ENCODE measurements at regions of chr5 and their contacts with region 1.

Region 1: GRCh38 chr5:32585446-32586275 is at the start of gene SUB1:
- DNase-seq: peak; percentile 92
- H3K4me3 Mint-ChIP-seq: peak within 1 kb of the TSS; percentile 95
- H3K27ac Mint-ChIP-seq: peak within 1 kb of the TSS; percentile 94
- H3K4me1 Mint-ChIP-seq: peaks cover 21% of the 10 kb centered on the region
- H3K27me3 Mint-ChIP-seq: no peaks in the 10 kb centered on the region
- CTCF ChIP-seq: no peak
- total RNA-seq, gene SUB1: 269 and 302 TPM in 2 replicates

Region 2: GRCh38 chr5:32390819-32391591 is 194.7 kb before region 1 on chr5:
- CTCF ChIA-PET with region 1: interaction called, 7 read pairs
- POLR2A ChIA-PET with region 1: interaction called, 5 read pairs
- intact Hi-C with region 1: loop called (anchors 2 kb)
- DNase-seq: peak; percentile 89
- H3K4me3 Mint-ChIP-seq: peak overlapping the region; percentile 36
- H3K27ac Mint-ChIP-seq: peak overlapping the region; percentile 90
- H3K4me1 Mint-ChIP-seq: peaks cover 22% of the 10 kb centered on the region
- H3K27me3 Mint-ChIP-seq: no peaks in the 10 kb centered on the region
- CTCF ChIP-seq: no peak

Region 3: GRCh38 chr5:32482193-32482592 is 103.5 kb before region 1 on chr5:
- CTCF ChIA-PET with region 1: interaction called, 169 read pairs
- POLR2A ChIA-PET with region 1: no interaction called
- intact Hi-C with region 1: no loop called
- DNase-seq: no peak
- H3K4me3 Mint-ChIP-seq: no peak overlapping the region
- H3K27ac Mint-ChIP-seq: no peak overlapping the region
- H3K4me1 Mint-ChIP-seq: no peaks in the 10 kb centered on the region
- H3K27me3 Mint-ChIP-seq: no peaks in the 10 kb centered on the region
- CTCF ChIP-seq: no peak

Region 4: GRCh38 chr5:32504989-32505596 is 80.6 kb before region 1 on chr5:
- CTCF ChIA-PET with region 1: interaction called, 11 read pairs
- POLR2A ChIA-PET with region 1: interaction called, 4 read pairs
- intact Hi-C with region 1: no loop called
- DNase-seq: peak; percentile 60
- H3K4me3 Mint-ChIP-seq: no peak overlapping the region
- H3K27ac Mint-ChIP-seq: no peak overlapping the region
- H3K4me1 Mint-ChIP-seq: peaks cover 6% of the 10 kb centered on the region
- H3K27me3 Mint-ChIP-seq: no peaks in the 10 kb centered on the region
- CTCF ChIP-seq: no peak

Region 5: DNA sequence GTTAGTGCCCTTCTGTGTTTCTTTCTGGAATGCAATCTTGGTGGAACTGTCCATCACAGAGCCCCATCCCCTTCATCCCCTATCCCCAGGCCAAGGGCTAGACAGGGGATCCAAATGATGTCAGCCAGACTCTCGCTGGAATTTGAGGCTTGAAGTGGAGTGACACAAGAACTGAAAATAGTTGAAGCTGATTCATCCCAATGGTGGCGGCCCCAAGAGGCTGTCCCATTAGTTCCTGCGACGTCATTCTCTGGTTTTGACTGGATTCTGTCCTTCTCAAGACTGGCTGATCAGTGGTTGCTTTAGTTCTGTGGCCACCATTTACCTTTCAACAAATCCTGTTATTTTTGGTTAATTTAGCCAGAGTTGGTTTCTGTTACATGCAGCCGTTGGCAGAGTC is 59.6 kb after region 1 on chr5:
- CTCF ChIA-PET with region 1: no interaction called
- POLR2A ChIA-PET with region 1: no interaction called
- intact Hi-C with region 1: no loop called
- DNase-seq: no peak
- H3K4me3 Mint-ChIP-seq: no peak overlapping the region
- H3K27ac Mint-ChIP-seq: no peak overlapping the region
- H3K4me1 Mint-ChIP-seq: peaks cover 16% of the 10 kb centered on the region
- H3K27me3 Mint-ChIP-seq: no peaks in the 10 kb centered on the region
- CTCF ChIP-seq: no peak

Measured in MCF 10A (cell line).